Right cardiac atrium (tissue), 5 donors: ENCODE measurements at regions of chr20 and their contacts with region 1.

Region 1: DNA sequence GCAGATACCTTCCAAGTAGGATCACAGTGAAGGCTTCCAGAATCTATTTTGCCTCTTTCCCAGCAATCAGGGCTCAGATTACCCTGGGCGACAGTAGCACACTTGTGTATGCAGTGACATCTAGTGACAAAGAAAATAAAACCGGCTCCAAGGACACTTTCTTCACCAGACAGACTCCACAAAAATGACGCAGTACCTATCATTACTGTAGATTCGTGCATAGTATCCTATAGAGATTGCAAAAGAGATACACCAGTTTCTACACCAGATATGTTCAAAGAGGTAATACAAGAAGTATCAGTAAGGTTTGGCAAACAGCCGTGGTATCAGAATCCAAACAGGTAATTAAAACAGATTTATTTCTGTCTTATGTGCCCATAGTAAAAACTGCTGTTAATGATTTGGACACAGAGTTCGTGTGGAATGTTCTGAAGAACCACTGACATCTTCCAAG is 600.4 kb upstream of the JAG1 start:
- DNase-seq: peak in 1 of 3 donors; percentile 53
- ATAC-seq: peak; percentile 88 to 89
- H3K4me3 ChIP-seq: no peak overlapping the region
- H3K27ac ChIP-seq: no peak overlapping the region
- H3K4me1 ChIP-seq: peaks cover 4% of the 10 kb centered on the region
- H3K27me3 ChIP-seq: no peaks in the 10 kb centered on the region

Region 2: GRCh38 chr20:10476319-10476724 is 797.8 kb before region 1 on chr20:
- intact Hi-C with region 1: loop called in 1 of 4 experiments (anchors 10 kb)
- DNase-seq: no peak
- ATAC-seq: no peak
- H3K4me3 ChIP-seq: no peak overlapping the region
- H3K27ac ChIP-seq: no peak overlapping the region
- H3K4me1 ChIP-seq: peaks cover 5% of the 10 kb centered on the region
- H3K27me3 ChIP-seq: no peaks in the 10 kb centered on the region

Region 3: DNA sequence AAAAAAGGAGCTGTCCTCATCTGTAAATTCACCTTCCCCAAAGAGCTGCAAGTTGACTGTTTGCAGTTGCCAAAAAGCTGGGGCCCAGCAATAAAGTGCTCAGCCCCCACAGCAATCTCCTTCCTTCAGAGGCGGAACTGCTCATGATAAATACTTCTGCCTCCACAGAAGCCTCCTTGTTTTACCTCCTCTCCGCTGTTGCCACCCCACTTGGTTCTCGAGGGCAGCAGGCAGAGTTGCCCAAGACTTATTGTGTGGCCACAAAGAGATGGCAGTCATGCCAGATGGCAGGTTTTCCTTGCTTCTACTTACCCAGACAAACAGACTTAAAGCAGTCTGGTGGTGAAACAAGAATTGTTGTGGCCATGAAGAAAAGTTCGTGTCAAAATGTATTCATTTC is 772.8 kb before region 1 on chr20:
- intact Hi-C with region 1: no loop called
- DNase-seq: no peak
- ATAC-seq: peak in 1 of 2 donors; percentile 22
- H3K4me3 ChIP-seq: peak overlapping the region; percentile 20
- H3K27ac ChIP-seq: no peak overlapping the region
- H3K4me1 ChIP-seq: no peaks in the 10 kb centered on the region
- H3K27me3 ChIP-seq: no peaks in the 10 kb centered on the region

Region 4: GRCh38 chr20:10553326-10553984 is 720.7 kb before region 1 on chr20:
- intact Hi-C with region 1: loop called (anchors 5 to 10 kb)
- DNase-seq: peak; percentile 69 to 91 (median 82)
- ATAC-seq: peak; percentile 72 to 81
- H3K4me3 ChIP-seq: no peak overlapping the region
- H3K27ac ChIP-seq: no peak overlapping the region
- H3K4me1 ChIP-seq: no peaks in the 10 kb centered on the region
- H3K27me3 ChIP-seq: no peaks in the 10 kb centered on the region